H1 (cell line): ENCODE measurements at regions of chr2 and their contacts with region 1.

Region 1: DNA sequence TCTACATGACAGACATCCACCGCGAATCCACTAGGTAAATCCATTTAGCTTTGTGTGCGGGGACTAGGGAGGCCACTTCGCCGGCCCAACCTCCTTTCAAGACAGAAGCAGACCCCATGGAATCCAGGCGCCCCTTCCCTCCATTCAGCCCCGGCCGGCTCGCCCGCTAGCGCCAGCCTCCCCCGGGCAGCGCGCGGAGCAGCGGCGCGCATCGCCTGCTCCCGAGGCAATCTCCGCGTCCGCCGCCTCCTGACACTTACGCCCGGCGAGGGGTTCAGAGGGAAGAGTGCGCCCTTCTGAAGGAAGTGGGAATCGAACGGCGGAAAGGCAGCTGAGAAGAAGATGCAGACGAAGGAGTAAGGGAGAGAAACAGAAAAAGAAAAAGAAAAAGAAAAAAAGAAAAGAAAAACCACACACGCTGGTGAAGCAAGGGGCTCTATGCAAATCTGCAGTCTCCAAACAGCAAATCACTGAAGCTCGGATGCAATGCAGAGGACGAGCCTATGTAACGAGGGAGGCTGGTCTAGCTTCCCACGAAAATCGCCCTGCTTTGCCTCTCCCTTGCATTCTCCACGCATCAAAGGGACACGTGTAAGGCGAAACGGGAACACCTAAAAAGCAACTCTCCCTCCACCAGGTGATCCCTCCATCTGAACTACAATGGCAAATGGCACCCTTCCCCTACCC is 684.4 kb downstream of the NRXN1 start:
- DNase-seq: peak in 1 of 2 experiments; percentile 68
- H3K4me3 ChIP-seq: peak overlapping the region; percentile 44 to 79 (median 66)
- H3K27ac ChIP-seq: no peak overlapping the region
- H3K4me1 ChIP-seq: peaks cover 3 to 12% (median 7%) of the 10 kb centered on the region in 4 experiments
- H3K27me3 ChIP-seq: peaks cover 0 to 34% (median 23%) of the 10 kb centered on the region in 4 experiments; a peak in 6 of 7 replicates
- CTCF ChIP-seq: 0 out of 4 replicates have a peak, but pooled peaks of 1 of the 3 experiments have one; percentile 2
- EP300 ChIP-seq: peak in 1 of 2 experiments; percentile 78; a peak in 1 of 3 replicates
- POLR2A ChIP-seq: peak in 1 of 2 experiments; percentile 29; a peak in 1 of 3 replicates
- RAD21 ChIP-seq: no peak

Region 2: GRCh38 chr2:50318147-50318546 is 29.4 kb before region 1 on chr2:
- CTCF ChIA-PET with region 1: interaction called, 13 read pairs
- POLR2A ChIA-PET with region 1: no interaction called
- DNase-seq: no peak
- H3K4me3 ChIP-seq: no peak overlapping the region
- H3K27ac ChIP-seq: no peak overlapping the region
- H3K4me1 ChIP-seq: peaks cover 0 to 3% (median 0%) of the 10 kb centered on the region in 4 experiments; a peak in 1 of 7 replicates
- H3K27me3 ChIP-seq: peaks cover 0 to 1% (median 0%) of the 10 kb centered on the region in 4 experiments; a peak in 1 of 7 replicates
- CTCF ChIP-seq: no peak
- EP300 ChIP-seq: no peak
- POLR2A ChIP-seq: no peak
- RAD21 ChIP-seq: no peak

Region 3: DNA sequence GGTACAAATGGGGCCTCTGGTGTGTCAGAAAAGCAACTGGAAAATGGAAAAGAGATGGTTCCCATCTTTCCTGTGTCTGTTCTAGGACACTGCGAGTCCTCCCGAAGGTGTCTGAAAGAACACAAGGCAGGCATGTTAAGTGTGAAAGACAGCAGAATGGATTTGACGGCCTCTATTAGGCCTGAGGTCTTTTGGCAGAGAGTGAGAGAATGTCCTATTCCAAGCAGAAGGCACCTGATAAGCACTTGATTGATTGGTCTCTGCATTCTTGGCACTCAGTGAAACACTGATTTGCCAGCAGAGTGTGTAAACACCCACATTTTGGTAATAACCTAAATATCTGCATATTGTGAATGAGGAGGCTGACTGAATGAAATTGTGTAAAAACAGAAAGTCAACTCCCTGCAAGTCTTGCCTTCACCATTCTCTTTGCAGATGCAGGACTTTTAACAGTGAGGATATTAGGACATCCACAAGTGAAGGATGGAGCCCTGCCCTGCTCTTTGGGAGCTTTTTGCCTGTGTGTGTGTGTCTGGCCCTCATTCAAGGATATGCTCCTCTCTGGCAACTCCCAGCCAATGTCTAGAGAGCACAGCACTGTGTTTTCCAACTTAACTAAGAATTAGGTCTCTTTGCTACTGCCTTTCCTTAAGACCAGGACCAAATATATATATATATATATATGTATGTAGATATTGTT is 13.8 kb before region 1 on chr2:
- CTCF ChIA-PET with region 1: interaction called, 16 read pairs
- POLR2A ChIA-PET with region 1: interaction called, 4 read pairs
- DNase-seq: no peak
- H3K4me3 ChIP-seq: no peak overlapping the region
- H3K27ac ChIP-seq: no peak overlapping the region
- H3K4me1 ChIP-seq: peaks cover 0 to 9% (median 2%) of the 10 kb centered on the region in 4 experiments; a peak in 4 of 7 replicates
- H3K27me3 ChIP-seq: no peaks in the 10 kb centered on the region
- CTCF ChIP-seq: no peak
- EP300 ChIP-seq: no peak
- POLR2A ChIP-seq: no peak
- RAD21 ChIP-seq: no peak

Region 4: DNA sequence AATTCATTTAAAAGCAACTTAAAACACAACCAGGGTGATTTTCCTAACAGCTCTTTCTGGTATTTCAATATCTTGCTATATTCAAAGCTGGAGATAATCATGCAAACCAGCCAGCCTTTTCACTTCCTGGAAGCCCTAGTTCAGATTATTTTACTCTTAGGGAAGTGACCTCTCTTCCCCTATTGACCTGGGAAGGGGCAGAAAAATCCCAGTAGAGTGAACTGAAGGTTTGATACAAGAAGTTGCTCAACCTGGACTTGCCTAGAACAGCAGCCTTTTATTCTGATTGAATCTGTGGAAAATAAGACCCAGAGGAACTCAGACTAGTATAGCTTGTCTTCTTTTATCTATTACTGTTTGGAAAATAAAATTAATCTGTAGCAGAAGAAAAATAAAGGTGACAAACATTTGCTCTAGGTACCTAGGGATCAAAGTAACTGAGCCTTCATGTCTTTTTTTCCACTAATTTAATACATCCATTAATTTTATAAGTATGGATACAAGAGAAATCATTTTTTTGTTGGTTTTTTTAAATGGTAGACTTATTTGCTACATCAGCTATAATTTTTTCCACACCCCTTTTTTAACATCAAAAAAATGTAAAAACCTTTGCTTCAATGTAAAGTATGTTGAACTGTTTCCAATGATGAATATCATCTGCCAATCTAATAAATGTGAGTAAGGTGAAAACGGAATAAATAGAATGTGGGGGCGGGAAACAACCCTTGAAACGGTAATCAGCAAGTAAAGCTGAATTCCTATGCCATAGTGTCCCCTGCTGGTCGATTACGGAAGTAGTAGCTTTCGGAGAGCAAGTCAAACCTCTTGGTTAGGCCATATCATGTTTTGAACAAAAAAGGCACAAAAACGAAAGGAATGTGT is 54.5 kb after region 1 on chr2:
- CTCF ChIA-PET with region 1: interaction called, 28 read pairs
- POLR2A ChIA-PET with region 1: interaction called, 3 read pairs
- DNase-seq: peak; percentile 29 to 84
- H3K4me3 ChIP-seq: no peak overlapping the region
- H3K27ac ChIP-seq: no peak overlapping the region
- H3K4me1 ChIP-seq: peaks cover 0 to 5% (median 3%) of the 10 kb centered on the region in 4 experiments; a peak in 3 of 7 replicates
- H3K27me3 ChIP-seq: no peaks in the 10 kb centered on the region
- CTCF ChIP-seq: peak; percentile 13 to 93 (median 77)
- EP300 ChIP-seq: no peak
- POLR2A ChIP-seq: no peak
- RAD21 ChIP-seq: peak; percentile 97 to 98

Region 5: GRCh38 chr2:50649626-50650402 is 302.3 kb after region 1 on chr2:
- CTCF ChIA-PET with region 1: no interaction called
- POLR2A ChIA-PET with region 1: no interaction called
- DNase-seq: no peak
- H3K4me3 ChIP-seq: no peak overlapping the region
- H3K27ac ChIP-seq: no peak overlapping the region
- H3K4me1 ChIP-seq: peaks cover 0 to 8% (median 7%) of the 10 kb centered on the region in 4 experiments; a peak in 6 of 7 replicates
- H3K27me3 ChIP-seq: no peaks in the 10 kb centered on the region
- CTCF ChIP-seq: no peak
- EP300 ChIP-seq: no peak
- POLR2A ChIP-seq: no peak
- RAD21 ChIP-seq: no peak